Endothelial cell of umbilical vein (primary cell): ENCODE measurements at regions of chr7 and their contacts with region 1.

Region 1: DNA sequence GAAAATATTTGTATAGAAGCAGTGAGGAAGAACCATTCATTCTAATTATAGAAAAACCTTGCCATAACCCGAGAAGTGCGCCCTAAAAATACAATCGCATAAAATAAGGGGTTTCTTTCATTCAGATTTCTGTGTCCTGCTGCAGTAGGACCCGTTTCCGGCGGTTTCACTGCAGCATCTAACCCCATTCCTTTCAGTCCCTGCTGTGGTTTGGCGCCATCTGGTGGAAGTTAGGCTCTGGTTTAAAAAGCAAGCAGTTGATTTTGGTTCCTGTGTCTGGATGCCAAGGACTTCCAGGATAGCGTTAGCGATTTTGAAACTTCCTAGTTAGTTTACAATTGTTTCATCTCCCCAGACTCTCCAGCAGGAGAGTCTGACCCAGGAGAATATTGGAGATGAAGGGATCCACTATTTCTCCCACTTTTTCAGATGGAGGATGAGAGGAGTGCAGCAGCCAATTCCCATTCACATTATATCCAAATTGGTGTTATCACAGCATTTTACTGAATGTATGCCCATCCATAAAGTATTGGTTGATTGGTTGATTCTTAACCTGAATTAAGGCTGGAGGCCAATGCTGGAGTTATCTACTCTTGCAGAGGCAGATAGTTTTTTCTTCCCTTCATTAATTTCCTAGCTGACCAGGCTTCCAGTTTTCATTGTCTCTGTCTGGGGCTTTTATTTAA is 128.8 kb upstream of the CACNA2D1 start:
- DNase-seq: peak; percentile 80
- H3K4me3 ChIP-seq: peak overlapping the region in 1 of 3 experiments; percentile 37
- H3K27ac ChIP-seq: no peak overlapping the region
- H3K4me1 ChIP-seq: peaks cover 4% of the 10 kb centered on the region
- H3K27me3 ChIP-seq: no peaks in the 10 kb centered on the region
- CTCF ChIP-seq: peak; percentile 76 to 87
- POLR2A ChIP-seq: no peak

Region 2: DNA sequence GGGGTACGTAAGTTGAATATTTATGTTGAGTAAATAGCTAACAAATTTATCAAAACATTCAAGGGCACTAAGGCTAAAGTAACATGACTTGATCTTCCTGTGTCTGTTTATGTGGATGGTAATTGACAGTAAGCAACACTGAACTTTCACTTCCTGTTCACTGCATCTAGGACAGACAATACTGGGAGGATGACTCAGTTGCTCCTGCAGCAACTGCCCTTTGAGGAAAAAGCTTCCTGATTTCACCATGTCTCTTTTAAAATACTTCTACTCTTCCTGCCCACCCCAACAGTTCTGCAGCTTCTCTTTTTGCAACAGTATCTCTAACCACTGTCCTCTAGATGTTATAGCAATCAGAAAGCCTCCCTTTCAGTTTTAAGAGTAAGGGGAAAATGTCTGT is 725.9 kb before region 1 on chr7:
- CTCF ChIA-PET with region 1: no interaction called
- POLR2A ChIA-PET with region 1: no interaction called
- dilution Hi-C with region 1: no loop called
- intact Hi-C with region 1: no loop called
- DNase-seq: peak; percentile 53
- H3K4me3 ChIP-seq: no peak overlapping the region
- H3K27ac ChIP-seq: no peak overlapping the region
- H3K4me1 ChIP-seq: peaks cover 8% of the 10 kb centered on the region
- H3K27me3 ChIP-seq: no peaks in the 10 kb centered on the region
- CTCF ChIP-seq: no peak
- POLR2A ChIP-seq: no peak

Region 3: DNA sequence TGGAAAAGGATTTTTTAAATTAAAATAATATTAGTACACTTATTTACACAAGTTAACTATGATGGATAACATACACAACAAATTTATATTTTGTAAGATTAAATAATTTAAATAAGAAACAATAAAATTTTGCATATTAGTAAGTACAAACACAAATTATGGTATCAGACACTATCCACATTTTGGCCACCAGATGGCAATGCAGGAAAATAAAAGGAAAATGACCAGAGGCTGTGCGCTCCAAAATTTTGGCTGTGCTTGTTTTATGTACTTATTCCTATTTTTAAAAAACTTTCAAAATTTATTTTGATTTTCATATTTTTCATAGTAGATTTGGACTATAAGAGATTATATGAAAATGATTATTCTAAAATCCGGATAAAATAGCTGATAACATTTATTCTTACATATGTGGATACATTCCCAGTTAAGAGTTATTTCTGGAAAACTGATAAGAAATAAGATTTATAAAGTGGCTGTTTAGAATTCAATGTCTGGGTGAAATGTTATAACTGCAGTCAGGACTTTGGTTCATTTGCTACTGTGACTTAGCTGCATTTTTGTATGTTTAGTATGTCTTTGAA is 527.7 kb before region 1 on chr7:
- CTCF ChIA-PET with region 1: interaction called, 82 read pairs
- POLR2A ChIA-PET with region 1: no interaction called
- dilution Hi-C with region 1: no loop called
- intact Hi-C with region 1: loop called (anchors 1 kb)
- DNase-seq: peak; percentile 67
- H3K4me3 ChIP-seq: no peak overlapping the region
- H3K27ac ChIP-seq: no peak overlapping the region
- H3K4me1 ChIP-seq: peaks cover 27% of the 10 kb centered on the region
- H3K27me3 ChIP-seq: no peaks in the 10 kb centered on the region
- CTCF ChIP-seq: peak; percentile 36
- POLR2A ChIP-seq: no peak

Region 4: DNA sequence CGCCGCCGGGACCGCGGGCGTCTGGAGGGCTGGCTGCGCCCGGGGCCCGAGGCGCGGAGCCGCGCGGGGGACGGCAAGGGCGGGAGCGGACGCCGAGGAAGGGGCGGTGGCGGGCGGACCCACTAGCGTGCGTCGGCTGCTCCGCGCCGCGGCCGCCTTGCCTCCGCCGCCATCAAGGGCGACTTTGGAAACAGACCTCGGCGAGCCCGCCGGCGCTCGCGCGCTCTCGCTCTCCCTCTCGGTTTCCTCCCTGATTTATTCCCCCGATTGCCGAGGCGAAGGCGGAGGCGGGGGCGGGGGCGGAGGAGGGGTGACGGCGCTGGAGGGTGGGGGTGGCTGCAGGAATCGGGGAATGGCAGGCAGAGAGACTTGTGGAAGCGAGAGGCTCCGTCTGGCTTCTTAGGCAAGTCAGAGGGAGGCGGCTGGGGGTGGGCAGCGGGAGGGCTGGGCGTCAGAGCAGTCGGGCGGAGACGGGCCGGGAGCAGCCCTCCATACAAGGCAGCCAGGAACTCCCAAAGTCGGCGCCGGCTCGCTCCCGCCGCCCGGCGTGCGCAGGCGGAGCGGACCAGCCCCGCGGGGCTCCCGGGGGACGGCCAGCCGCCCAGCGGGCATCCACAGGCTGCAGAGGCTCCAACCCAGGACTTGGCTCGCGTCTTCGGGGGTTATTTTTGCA is 128.7 kb before region 1 on chr7 and contains the start of gene CACNA2D1:
- CTCF ChIA-PET with region 1: interaction called, 3 read pairs
- POLR2A ChIA-PET with region 1: no interaction called
- dilution Hi-C with region 1: no loop called
- intact Hi-C with region 1: loop called (anchors 1 kb)
- DNase-seq: peak; percentile 88
- H3K4me3 ChIP-seq: peak within 1 kb of the TSS; percentile 59 to 91 (median 79)
- H3K27ac ChIP-seq: peak within 1 kb of the TSS; percentile 80
- H3K4me1 ChIP-seq: peaks cover 19% of the 10 kb centered on the region
- H3K27me3 ChIP-seq: no peaks in the 10 kb centered on the region
- CTCF ChIP-seq: peak in 1 of 2 donors; percentile 26
- POLR2A ChIP-seq: peak; percentile 88
- total RNA-seq, gene CACNA2D1: 38.6 and 42.1 TPM in 2 replicates

Region 5: GRCh38 chr7:82559193-82559805 is 13.0 kb before region 1 on chr7:
- CTCF ChIA-PET with region 1: interaction called, 25 read pairs
- POLR2A ChIA-PET with region 1: no interaction called
- dilution Hi-C with region 1: no loop called
- intact Hi-C with region 1: no loop called
- DNase-seq: peak; percentile 23
- H3K4me3 ChIP-seq: no peak overlapping the region
- H3K27ac ChIP-seq: no peak overlapping the region
- H3K4me1 ChIP-seq: no peaks in the 10 kb centered on the region
- H3K27me3 ChIP-seq: no peaks in the 10 kb centered on the region
- CTCF ChIP-seq: no peak
- POLR2A ChIP-seq: no peak

Region 6: DNA sequence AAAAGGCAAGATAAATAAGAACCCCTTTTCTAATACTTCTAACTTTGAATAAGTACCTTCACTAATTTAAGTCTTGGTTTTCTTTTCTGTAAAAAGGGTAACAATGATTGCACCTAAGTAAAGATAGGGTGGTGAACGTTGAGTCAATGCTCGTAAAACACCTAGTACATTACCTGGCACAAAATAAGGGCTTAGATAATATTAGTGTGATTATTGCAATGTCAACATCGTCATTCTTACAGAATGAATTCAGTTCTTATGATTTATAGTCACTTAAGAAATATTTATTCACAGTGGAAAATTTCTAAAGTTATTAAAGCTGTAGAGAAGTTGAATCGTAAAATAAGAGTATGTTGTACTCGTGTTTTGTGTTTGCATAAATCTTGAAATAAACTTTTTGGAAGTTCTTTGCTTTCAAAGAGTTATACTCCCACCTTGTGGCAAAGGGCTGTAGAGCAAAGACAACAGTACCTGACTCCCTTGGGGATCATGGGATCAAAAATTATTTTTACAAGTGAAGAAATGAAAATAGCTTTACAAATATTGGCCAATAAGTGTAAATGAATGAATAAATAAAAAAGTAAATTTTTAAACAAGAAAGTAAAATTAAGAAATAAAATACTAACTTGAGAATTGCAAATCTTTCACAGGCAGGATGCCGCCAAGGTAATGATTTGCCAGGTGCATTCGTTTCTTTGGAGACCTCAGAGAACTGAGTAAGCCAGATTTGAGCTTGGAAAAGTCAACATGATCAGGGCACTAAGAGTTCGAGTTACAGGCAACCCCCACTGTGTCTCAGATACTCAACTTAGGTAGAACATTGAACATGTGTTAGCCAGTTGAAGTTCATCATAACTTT is 157.1 kb after region 1 on chr7:
- CTCF ChIA-PET with region 1: interaction called, 5 read pairs
- POLR2A ChIA-PET with region 1: no interaction called
- dilution Hi-C with region 1: no loop called
- intact Hi-C with region 1: loop called (anchors 1 kb)
- DNase-seq: peak; percentile 60
- H3K4me3 ChIP-seq: no peak overlapping the region
- H3K27ac ChIP-seq: no peak overlapping the region
- H3K4me1 ChIP-seq: no peaks in the 10 kb centered on the region
- H3K27me3 ChIP-seq: no peaks in the 10 kb centered on the region
- CTCF ChIP-seq: peak; percentile 48 to 62
- POLR2A ChIP-seq: no peak